Endothelial cell of umbilical vein (primary cell): ENCODE measurements at regions of chr20 and their contacts with region 1.

Region 1: GRCh38 chr20:32433311-32434021 is 75.3 kb downstream of the ASXL1 start:
- DNase-seq: peak; percentile 87
- H3K4me3 ChIP-seq: no peak overlapping the region
- H3K27ac ChIP-seq: peak overlapping the region; percentile 75
- H3K4me1 ChIP-seq: peaks cover 32% of the 10 kb centered on the region
- H3K27me3 ChIP-seq: no peaks in the 10 kb centered on the region
- CTCF ChIP-seq: no peak
- POLR2A ChIP-seq: peak; percentile 17

Region 2: DNA sequence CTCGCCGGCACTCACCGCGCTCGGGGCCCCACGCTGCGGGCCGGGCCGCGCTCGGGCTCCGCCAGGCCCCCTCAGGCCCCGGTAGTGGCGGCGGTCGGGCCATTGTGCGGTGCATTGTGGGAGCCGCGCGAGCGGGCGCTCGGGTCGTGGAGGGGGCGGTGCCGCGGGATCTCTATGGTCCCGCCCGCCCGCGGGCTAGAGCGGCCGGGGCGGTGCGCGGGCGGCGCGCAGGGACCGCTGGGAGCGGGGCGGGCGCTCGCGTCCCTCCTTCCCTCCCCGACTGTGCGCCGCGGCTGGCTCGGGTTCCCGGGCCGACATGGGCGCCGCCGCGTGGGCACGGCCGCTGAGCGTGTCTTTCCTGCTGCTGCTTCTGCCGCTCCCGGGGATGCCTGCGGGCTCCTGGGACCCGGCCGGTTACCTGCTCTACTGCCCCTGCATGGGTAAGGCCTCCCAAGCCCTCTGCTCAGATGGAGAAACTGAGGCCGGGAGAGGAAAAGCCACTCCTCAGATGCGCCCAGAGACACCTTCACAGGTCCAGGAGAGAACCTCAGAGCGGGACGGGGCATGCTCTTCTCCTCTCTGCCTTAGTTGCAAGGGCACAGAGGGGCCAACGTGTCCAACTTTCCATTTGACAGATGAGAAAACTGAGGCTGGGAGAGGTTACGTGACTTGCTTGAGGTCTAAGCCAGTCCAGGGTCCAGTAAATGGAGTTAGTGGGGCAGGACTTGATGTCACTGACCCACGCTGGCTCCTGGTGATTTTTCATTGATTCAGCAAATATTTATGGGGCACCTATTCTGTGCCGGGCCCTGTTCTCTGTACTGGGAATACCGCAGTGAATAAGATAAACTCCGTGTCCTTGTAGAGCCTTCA is 225.6 kb before region 1 on chr20 and contains the starts of genes PLAGL2 and POFUT1:
- CTCF ChIA-PET with region 1: no interaction called
- POLR2A ChIA-PET with region 1: no interaction called
- dilution Hi-C with region 1: no loop called
- intact Hi-C with region 1: loop called (anchors 5 kb)
- DNase-seq: peak; percentile 79
- H3K4me3 ChIP-seq: peak within 1 kb of the TSS; percentile 38 to 81 (median 76)
- H3K27ac ChIP-seq: peak within 1 kb of the TSS; percentile 45
- H3K4me1 ChIP-seq: peaks cover 21% of the 10 kb centered on the region
- H3K27me3 ChIP-seq: no peaks in the 10 kb centered on the region
- CTCF ChIP-seq: peak; percentile 13 to 34
- POLR2A ChIP-seq: peak; percentile 95
- total RNA-seq, gene PLAGL2: 14.6 and 15.2 TPM in 2 replicates
- total RNA-seq, gene POFUT1: 48.1 and 51.4 TPM in 2 replicates